K562 (cell line): ENCODE measurements at regions of chr1 and their contacts with region 1.

Region 1: GRCh38 chr1:24438423-24438901 is 22.9 kb downstream of the NIPAL3 start:
- DNase-seq: peak; percentile 41 to 86 (median 63)
- ATAC-seq: peak; percentile 99
- H3K4me3 ChIP-seq: no peak overlapping the region
- H3K27ac ChIP-seq: peak overlapping the region; percentile 2; the same call in 1 of the 3 replicates
- H3K4me1 ChIP-seq: peaks cover 9 to 19% of the 10 kb centered on the region in 2 experiments; a peak in 4 of 5 replicates
- H3K27me3 ChIP-seq: no peaks in the 10 kb centered on the region
- CTCF ChIP-seq: peak; percentile 55 to 59 (median 56)
- EP300 ChIP-seq: peak; percentile 83
- POLR2A ChIP-seq: no peak
- RAD21 ChIP-seq: peak; percentile 42 to 49

Region 2: GRCh38 chr1:24403806-24404205 is 34.7 kb before region 1 on chr1:
- CTCF ChIA-PET with region 1: no interaction called
- POLR2A ChIA-PET with region 1: no interaction called
- in situ Hi-C with region 1: no loop called
- intact Hi-C with region 1: no loop called
- DNase-seq: no peak
- ATAC-seq: no peak
- H3K4me3 ChIP-seq: no peak overlapping the region
- H3K27ac ChIP-seq: no peak overlapping the region
- H3K4me1 ChIP-seq: no peaks in the 10 kb centered on the region
- H3K27me3 ChIP-seq: no peaks in the 10 kb centered on the region
- CTCF ChIP-seq: no peak
- EP300 ChIP-seq: no peak
- POLR2A ChIP-seq: no peak
- RAD21 ChIP-seq: no peak

Region 3: GRCh38 chr1:24424207-24424606 is 14.3 kb before region 1 on chr1:
- CTCF ChIA-PET with region 1: no interaction called
- POLR2A ChIA-PET with region 1: interaction called, 14 read pairs
- in situ Hi-C with region 1: no loop called
- intact Hi-C with region 1: no loop called
- DNase-seq: no peak
- ATAC-seq: no peak
- H3K4me3 ChIP-seq: no peak overlapping the region
- H3K27ac ChIP-seq: no peak overlapping the region
- H3K4me1 ChIP-seq: peaks cover 8 to 10% of the 10 kb centered on the region in 2 experiments; a peak in 4 of 5 replicates
- H3K27me3 ChIP-seq: no peaks in the 10 kb centered on the region
- CTCF ChIP-seq: no peak
- EP300 ChIP-seq: no peak
- POLR2A ChIP-seq: no peak
- RAD21 ChIP-seq: no peak